ENCODE measurements at regions of chrX and their contacts with region 1.

Region 1: GRCh38 chrX:104166738-104167436 is 634 bp downstream of the FAM199X start:
- DNase-seq: no peak
- H3K4me3 Mint-ChIP-seq: peak overlapping the region; percentile 69
- H3K27ac Mint-ChIP-seq: peak overlapping the region; percentile 70
- H3K4me1 Mint-ChIP-seq: peaks cover 34% of the 10 kb centered on the region
- H3K27me3 Mint-ChIP-seq: no peaks in the 10 kb centered on the region
- CTCF ChIP-seq: no peak

Region 2: DNA sequence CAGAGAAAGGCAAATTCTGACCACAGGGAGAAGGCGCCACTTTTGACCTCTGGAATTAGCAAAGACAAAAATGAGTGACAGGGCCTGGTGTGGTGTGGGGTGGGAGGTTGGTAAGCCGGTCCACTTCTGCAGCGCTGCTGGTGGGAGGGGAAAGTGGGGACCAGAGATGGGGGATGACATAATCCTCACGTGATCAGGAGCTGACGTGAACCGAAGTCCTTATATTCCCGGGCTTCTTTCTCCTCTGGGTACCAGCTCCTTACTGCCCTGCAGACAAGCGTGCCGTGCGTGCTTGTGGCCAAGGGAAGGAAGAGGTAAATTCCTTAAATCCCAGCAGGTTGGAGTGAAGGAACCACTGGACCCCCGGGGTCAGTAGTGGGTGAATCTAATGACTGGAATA is 836.9 kb before region 1 on chrX and contains the start of gene TCEAL7:
- CTCF ChIA-PET with region 1: interaction called, 12 read pairs
- intact Hi-C with region 1: no loop called
- DNase-seq: no peak
- H3K4me3 Mint-ChIP-seq: no peak within 1 kb of the TSS
- H3K27ac Mint-ChIP-seq: no peak within 1 kb of the TSS
- H3K4me1 Mint-ChIP-seq: no peaks in the 10 kb centered on the region
- H3K27me3 Mint-ChIP-seq: no peaks in the 10 kb centered on the region
- CTCF ChIP-seq: no peak
- total RNA-seq, gene TCEAL7: not detected in 2 replicates

Region 3: DNA sequence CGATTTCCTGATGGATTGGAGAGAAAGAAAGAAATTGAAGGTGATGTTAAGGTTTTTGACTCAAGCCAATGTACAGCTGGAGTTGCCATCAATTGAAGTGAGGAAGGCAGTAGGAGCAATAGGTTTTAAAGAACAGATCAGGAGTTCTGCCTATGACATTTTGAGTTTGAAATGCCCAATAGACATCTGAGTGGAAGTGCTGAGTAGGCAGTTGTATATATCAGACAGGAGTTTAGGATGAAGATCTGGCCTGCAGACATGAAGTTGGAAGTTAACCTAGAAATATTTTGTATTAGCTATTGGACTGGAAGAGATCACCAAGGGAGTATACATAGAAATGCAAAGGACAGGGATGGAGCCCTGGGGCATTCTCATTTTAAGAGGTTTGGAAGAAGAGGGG is 217.4 kb before region 1 on chrX:
- CTCF ChIA-PET with region 1: interaction called, 13 read pairs
- intact Hi-C with region 1: no loop called
- DNase-seq: no peak
- H3K4me3 Mint-ChIP-seq: no peak overlapping the region
- H3K27ac Mint-ChIP-seq: no peak overlapping the region
- H3K4me1 Mint-ChIP-seq: no peaks in the 10 kb centered on the region
- H3K27me3 Mint-ChIP-seq: no peaks in the 10 kb centered on the region
- CTCF ChIP-seq: no peak